ENCODE measurements at regions of chr2 and their contacts with region 1.

Region 1: DNA sequence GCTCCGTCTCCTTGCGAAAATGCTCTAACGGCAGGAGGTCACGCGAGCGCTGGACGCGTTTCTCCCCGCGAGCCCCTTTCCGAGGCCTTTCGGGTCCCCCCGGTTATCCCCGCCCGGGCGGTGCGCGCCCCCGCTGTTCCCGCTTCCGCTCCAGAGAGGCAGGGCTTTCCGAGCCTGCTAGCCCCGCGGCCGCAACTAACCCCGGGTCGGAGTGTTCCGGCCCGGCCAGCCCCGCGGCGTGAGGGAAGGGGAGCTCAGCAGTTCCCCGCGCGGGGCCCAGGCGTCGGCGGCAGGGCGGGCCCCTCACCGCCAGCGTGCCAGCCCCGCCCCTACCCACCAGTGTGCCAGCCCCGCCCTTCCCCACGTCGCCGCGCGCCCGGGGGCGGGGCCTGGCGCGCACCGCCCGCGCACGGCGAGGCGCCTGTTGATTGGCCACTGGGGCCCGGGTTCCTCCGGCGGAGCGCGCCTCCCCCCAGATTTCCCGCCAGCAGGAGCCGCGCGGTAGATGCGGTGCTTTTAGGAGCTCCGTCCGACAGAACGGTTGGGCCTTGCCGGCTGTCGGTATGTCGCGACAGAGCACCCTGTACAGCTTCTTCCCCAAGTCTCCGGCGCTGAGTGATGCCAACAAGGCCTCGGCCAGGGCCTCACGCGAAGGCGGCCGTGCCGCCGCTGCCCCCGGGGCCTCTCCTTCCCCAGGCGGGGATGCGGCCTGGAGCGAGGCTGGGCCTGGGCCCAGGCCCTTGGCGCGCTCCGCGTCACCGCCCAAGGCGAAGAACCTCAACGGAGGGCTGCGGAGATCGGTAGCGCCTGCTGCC is at the start of gene MSH6:
- DNase-seq: peak; percentile 77 to 95 (median 87)
- ATAC-seq: peak; percentile 93
- H3K4me3 ChIP-seq: peak within 1 kb of the TSS; percentile 76 to 100
- H3K4me3 Mint-ChIP-seq: peak within 1 kb of the TSS; percentile 89
- H3K27ac ChIP-seq: peak within 1 kb of the TSS; percentile 80 to 92
- H3K27ac Mint-ChIP-seq: peak within 1 kb of the TSS; percentile 89
- H3K4me1 ChIP-seq: peaks cover 25% of the 10 kb centered on the region
- H3K4me1 Mint-ChIP-seq: peaks cover 37% of the 10 kb centered on the region
- H3K27me3 ChIP-seq: no peaks in the 10 kb centered on the region
- H3K27me3 Mint-ChIP-seq: no peaks in the 10 kb centered on the region
- CTCF ChIP-seq: no peak
- total RNA-seq, gene MSH6: 36.3 to 37.7 TPM

Region 2: DNA sequence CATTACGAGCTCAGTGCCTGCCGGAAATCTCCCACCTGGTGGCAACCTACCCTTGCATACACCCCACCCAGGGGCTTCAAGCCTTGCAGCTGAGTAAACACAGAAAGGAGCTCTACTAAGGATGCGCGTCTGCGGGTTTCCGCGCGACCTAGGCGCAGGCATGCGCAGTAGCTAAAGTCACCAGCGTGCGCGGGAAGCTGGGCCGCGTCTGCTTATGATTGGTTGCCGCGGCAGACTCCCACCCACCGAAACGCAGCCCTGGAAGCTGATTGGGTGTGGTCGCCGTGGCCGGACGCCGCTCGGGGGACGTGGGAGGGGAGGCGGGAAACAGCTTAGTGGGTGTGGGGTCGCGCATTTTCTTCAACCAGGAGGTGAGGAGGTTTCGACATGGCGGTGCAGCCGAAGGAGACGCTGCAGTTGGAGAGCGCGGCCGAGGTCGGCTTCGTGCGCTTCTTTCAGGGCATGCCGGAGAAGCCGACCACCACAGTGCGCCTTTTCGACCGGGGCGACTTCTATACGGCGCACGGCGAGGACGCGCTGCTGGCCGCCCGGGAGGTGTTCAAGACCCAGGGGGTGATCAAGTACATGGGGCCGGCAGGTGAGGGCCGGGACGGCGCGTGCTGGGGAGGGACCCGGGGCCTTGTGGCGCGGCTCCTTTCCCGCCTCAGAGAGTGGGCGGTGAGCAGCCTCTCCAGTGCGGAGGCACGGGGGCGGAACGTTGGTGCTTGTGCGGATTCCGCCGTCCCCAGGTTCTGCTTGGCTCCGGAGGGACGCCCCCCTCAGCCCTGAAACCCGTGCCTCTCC is 379.9 kb before region 1 on chr2 and contains the start of gene MSH2:
- CTCF ChIA-PET with region 1: interaction called, 3 read pairs
- POLR2A ChIA-PET with region 1: interaction called, 4 read pairs
- intact Hi-C with region 1: loop called (anchors 1 to 5 kb)
- DNase-seq: peak; percentile 72 to 96 (median 91)
- ATAC-seq: peak; percentile 93
- H3K4me3 ChIP-seq: peak within 1 kb of the TSS; percentile 81 to 100
- H3K4me3 Mint-ChIP-seq: peak within 1 kb of the TSS; percentile 98
- H3K27ac ChIP-seq: peak within 1 kb of the TSS; percentile 64 to 71
- H3K27ac Mint-ChIP-seq: peak within 1 kb of the TSS; percentile 94
- H3K4me1 ChIP-seq: peaks cover 15% of the 10 kb centered on the region
- H3K4me1 Mint-ChIP-seq: peaks cover 40% of the 10 kb centered on the region
- H3K27me3 ChIP-seq: no peaks in the 10 kb centered on the region
- H3K27me3 Mint-ChIP-seq: no peaks in the 10 kb centered on the region
- CTCF ChIP-seq: no peak
- total RNA-seq, gene MSH2: 5.6 to 8.8 TPM

Region 3: GRCh38 chr2:47767880-47768609 is 14.8 kb before region 1 on chr2:
- CTCF ChIA-PET with region 1: interaction called, 16 read pairs
- POLR2A ChIA-PET with region 1: no interaction called
- intact Hi-C with region 1: no loop called
- DNase-seq: peak; percentile 56 to 86 (median 74)
- ATAC-seq: peak; percentile 92
- H3K4me3 ChIP-seq: no peak overlapping the region
- H3K4me3 Mint-ChIP-seq: peak overlapping the region; percentile 41
- H3K27ac ChIP-seq: no peak overlapping the region
- H3K27ac Mint-ChIP-seq: no peak overlapping the region
- H3K4me1 ChIP-seq: peaks cover 7% of the 10 kb centered on the region
- H3K4me1 Mint-ChIP-seq: peaks cover 3% of the 10 kb centered on the region
- H3K27me3 ChIP-seq: peaks cover 0 to 3% of the 10 kb centered on the region in 2 experiments
- H3K27me3 Mint-ChIP-seq: peaks cover 3% of the 10 kb centered on the region
- CTCF ChIP-seq: peak; percentile 97

Region 4: DNA sequence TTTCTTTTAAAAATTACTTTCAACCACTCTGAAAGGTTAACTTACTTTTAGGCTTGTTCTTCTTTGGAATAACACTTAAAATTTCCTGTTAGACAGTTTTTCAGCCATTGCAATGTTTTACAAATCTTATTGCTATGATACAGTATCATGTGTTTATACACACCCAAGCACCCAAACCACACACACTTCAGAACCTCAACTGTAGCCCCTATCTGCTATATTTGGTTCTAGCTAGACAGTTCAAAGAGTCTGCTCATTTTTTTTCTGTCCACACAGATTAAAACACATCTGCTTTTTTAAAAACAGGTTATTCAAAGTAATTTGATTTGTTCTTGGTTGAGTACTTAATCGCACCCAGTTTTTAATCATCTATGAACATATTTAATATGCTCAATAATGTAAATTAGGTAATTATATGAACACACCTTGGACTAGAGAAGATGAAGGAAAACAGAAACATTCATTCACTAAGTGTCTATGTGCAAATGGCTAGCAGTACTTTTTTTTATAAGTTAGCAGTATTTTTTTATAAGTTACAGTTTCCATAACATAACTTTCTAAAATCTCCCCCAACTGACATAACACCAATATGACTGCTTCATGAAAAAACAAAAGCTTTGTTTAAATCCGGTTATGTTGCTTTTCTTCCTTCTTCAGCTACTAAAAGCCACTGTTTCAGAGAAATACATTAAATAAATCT is 105.9 kb after region 1 on chr2:
- CTCF ChIA-PET with region 1: no interaction called
- POLR2A ChIA-PET with region 1: no interaction called
- intact Hi-C with region 1: loop called in 1 of 2 experiments (anchors 5 kb)
- DNase-seq: peak in 6 of 9 experiments; percentile 7 to 87 (median 44)
- ATAC-seq: peak; percentile 94
- H3K4me3 ChIP-seq: no peak overlapping the region
- H3K4me3 Mint-ChIP-seq: peak overlapping the region; percentile 42
- H3K27ac ChIP-seq: peak overlapping the region; percentile 57 to 75
- H3K27ac Mint-ChIP-seq: peak overlapping the region; percentile 75
- H3K4me1 ChIP-seq: peaks cover 45% of the 10 kb centered on the region
- H3K4me1 Mint-ChIP-seq: peaks cover 72% of the 10 kb centered on the region
- H3K27me3 ChIP-seq: no peaks in the 10 kb centered on the region
- H3K27me3 Mint-ChIP-seq: no peaks in the 10 kb centered on the region
- CTCF ChIP-seq: no peak

Region 5: DNA sequence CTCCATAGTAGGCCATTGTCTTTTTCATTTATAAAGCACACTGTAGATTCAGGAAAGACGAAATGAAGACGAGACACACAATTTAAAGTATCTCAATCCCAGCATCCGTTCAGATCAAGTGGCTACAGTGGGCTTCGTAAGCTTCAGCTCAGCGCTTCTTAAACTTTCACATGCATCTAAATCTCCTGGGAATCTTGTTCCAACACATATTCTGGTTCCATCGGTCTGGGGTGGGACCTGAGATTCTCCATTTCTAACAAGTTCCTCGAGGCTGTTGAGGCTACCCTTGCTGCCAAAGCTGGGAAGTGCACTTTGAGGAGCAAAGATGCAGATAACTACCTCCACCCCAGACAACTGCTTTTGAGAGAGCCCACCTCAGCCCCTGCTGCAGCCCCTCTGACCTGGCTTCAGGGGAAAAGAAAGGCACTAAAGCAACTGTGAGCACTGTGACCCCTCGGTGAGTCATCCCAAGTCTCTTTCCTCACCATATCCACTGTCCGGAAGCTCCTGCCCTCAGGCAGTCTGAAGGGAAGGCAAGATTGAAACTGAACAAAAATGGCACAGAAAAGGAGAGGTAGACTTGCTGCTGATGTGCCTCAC is 324.5 kb after region 1 on chr2:
- CTCF ChIA-PET with region 1: interaction called, 5 read pairs
- POLR2A ChIA-PET with region 1: no interaction called
- intact Hi-C with region 1: loop called in 1 of 2 experiments (anchors 10 kb)
- DNase-seq: no peak
- ATAC-seq: no peak
- H3K4me3 ChIP-seq: no peak overlapping the region
- H3K4me3 Mint-ChIP-seq: no peak overlapping the region
- H3K27ac ChIP-seq: no peak overlapping the region
- H3K27ac Mint-ChIP-seq: no peak overlapping the region
- H3K4me1 ChIP-seq: peaks cover 11% of the 10 kb centered on the region
- H3K4me1 Mint-ChIP-seq: peaks cover 17% of the 10 kb centered on the region
- H3K27me3 ChIP-seq: peaks cover 0 to 4% of the 10 kb centered on the region in 2 experiments
- H3K27me3 Mint-ChIP-seq: no peaks in the 10 kb centered on the region
- CTCF ChIP-seq: no peak

Measured in CD8-positive, alpha-beta T cell (primary cell).